ENCODE measurements at regions of chr19 and their contacts with region 1.

Region 1: DNA sequence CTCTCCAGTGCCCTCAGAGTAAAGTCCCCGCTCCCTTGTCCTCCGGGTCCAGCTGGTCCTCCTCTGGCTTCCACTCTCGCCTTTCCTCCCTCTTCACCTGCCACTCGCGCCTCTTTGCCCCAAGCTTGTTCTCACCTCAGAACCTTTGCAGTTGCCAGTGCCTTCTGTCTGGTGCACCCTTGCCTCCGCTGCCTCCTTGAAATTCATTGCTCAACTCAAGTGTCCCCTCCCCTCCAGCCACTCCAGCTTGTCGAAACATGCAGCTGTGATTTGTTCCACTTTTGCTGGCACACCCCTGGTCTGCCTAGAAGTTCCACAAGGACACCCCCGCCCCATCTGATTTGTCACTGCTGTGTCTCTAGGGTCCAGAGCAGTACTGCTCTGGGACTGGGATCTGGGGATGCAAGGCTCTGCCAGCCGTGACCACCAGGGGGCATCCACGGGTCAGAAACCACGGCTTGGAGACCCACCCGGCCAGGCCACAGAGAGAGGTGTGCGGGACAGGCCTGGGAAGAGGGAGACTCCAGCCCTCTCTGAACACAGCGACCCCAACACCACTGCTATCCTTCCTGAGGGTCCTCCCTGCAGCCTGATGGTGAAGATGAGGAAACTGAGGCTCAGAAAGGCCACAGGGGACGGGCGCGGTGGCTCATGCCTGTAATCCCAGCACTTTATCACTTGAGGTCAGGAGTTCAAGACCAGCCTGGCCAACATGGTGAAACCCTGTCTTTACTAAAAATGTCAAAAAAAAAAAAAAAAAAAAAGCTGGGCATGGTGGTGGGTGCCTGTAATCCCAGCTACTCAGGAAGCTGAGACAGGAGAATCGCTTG is 49.9 kb downstream of the AP1M1 start:
- DNase-seq: peak; percentile 48 to 79
- H3K4me3 ChIP-seq: no peak overlapping the region
- H3K27ac ChIP-seq: no peak overlapping the region
- H3K4me1 ChIP-seq: no peaks in the 10 kb centered on the region
- H3K27me3 ChIP-seq: no peaks in the 10 kb centered on the region
- CTCF ChIP-seq: peak; percentile 99

Region 2: GRCh38 chr19:14775869-14776586 is 1471.5 kb before region 1 on chr19:
- CTCF ChIA-PET with region 1: no interaction called
- POLR2A ChIA-PET with region 1: no interaction called
- intact Hi-C with region 1: no loop called
- DNase-seq: no peak
- H3K4me3 ChIP-seq: peak overlapping the region; percentile 65
- H3K27ac ChIP-seq: no peak overlapping the region
- H3K4me1 ChIP-seq: no peaks in the 10 kb centered on the region; the same call in 1 of the 2 replicates
- H3K27me3 ChIP-seq: no peaks in the 10 kb centered on the region
- CTCF ChIP-seq: no peak

Region 3: GRCh38 chr19:16330368-16330801 is 82.8 kb after region 1 on chr19:
- CTCF ChIA-PET with region 1: no interaction called
- POLR2A ChIA-PET with region 1: no interaction called
- intact Hi-C with region 1: loop called (anchors 5 kb)
- DNase-seq: peak; percentile 92 to 98
- H3K4me3 ChIP-seq: no peak overlapping the region
- H3K27ac ChIP-seq: peak overlapping the region; percentile 50
- H3K4me1 ChIP-seq: peaks cover 13% of the 10 kb centered on the region
- H3K27me3 ChIP-seq: no peaks in the 10 kb centered on the region
- CTCF ChIP-seq: no peak

Region 4: DNA sequence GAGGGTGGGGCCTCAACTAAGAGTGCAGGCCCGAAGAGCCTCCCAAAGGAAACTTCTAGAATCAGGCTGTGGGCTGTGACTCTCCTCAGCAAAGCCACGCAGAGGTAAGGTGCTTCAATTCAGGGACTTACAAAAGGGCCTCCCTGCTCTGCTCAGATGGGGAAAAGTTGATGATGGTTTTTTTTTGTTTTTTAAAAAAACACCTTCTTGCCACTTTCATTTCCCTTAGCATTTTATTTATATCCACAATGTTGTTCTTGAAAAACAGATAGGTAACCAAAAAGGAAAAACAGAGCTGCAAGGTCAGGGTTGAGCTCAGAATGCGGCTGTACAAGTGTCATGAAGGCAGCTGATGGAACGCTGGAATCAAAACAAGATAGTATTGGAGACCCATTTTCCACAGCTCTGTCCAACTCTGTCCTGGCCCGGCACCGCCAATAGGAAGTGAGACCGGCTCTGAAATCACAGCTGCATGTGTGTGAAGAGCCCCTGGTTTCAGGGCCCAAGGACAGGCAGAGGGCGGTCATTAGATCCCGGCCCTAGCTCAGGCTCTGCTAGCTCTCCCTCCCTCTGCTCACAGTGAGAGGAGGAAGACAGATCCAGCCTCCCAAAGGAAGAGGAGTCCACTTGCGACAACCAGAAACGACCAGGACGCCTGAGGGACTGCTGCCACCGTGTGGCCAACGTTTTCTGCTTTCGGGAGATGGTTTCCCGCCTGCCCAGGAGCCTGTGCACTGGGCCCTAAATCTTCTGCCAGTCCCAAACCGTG is 135.4 kb after region 1 on chr19:
- CTCF ChIA-PET with region 1: interaction called, 31 read pairs
- POLR2A ChIA-PET with region 1: interaction called, 14 read pairs
- intact Hi-C with region 1: loop called (anchors 1 kb)
- DNase-seq: peak; percentile 60 to 67
- H3K4me3 ChIP-seq: no peak overlapping the region
- H3K27ac ChIP-seq: no peak overlapping the region
- H3K4me1 ChIP-seq: no peaks in the 10 kb centered on the region
- H3K27me3 ChIP-seq: no peaks in the 10 kb centered on the region
- CTCF ChIP-seq: peak; percentile 86

Region 5: GRCh38 chr19:16417660-16418596 is 170.4 kb after region 1 on chr19:
- CTCF ChIA-PET with region 1: interaction called, 4 read pairs
- POLR2A ChIA-PET with region 1: no interaction called
- intact Hi-C with region 1: loop called (anchors 1 kb)
- DNase-seq: peak; percentile 43 to 64
- H3K4me3 ChIP-seq: no peak overlapping the region
- H3K27ac ChIP-seq: no peak overlapping the region
- H3K4me1 ChIP-seq: no peaks in the 10 kb centered on the region
- H3K27me3 ChIP-seq: no peaks in the 10 kb centered on the region
- CTCF ChIP-seq: peak; percentile 90